ENCODE measurements at regions of chr15 and their contacts with region 1.

Region 1: GRCh38 chr15:64667736-64668161 is 107.6 kb downstream of the RBPMS2 start:
- DNase-seq: no peak
- H3K4me3 ChIP-seq: no peak overlapping the region
- H3K27ac ChIP-seq: no peak overlapping the region
- H3K4me1 ChIP-seq: no peaks in the 10 kb centered on the region
- H3K27me3 ChIP-seq: no peaks in the 10 kb centered on the region
- CTCF ChIP-seq: no peak

Region 2: DNA sequence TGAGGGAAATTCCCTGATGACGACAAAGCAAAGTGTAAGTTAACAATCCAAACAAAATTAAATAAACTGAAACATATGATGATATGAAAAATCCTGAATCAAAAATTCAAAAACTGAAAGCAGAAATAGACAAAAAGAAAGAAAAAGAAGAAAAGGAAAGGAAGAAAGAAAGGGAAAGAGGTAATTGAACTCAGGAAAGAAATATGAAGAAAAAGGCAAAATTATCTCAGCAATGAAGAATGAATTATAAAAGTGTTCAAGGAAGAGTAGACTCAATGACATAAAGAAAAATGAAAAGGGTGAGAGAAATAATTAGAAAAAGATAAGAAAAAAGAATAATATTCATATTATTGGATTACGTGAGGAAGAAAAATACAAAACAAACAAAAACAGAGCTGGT is 888.9 kb before region 1 on chr15:
- CTCF ChIA-PET with region 1: no interaction called
- POLR2A ChIA-PET with region 1: interaction called, 15 read pairs
- intact Hi-C with region 1: no loop called
- DNase-seq: no peak
- H3K4me3 ChIP-seq: no peak overlapping the region
- H3K27ac ChIP-seq: no peak overlapping the region
- H3K4me1 ChIP-seq: no peaks in the 10 kb centered on the region
- H3K27me3 ChIP-seq: no peaks in the 10 kb centered on the region
- CTCF ChIP-seq: no peak

Region 3: GRCh38 chr15:64883100-64883581 is 215.4 kb after region 1 on chr15:
- CTCF ChIA-PET with region 1: no interaction called
- POLR2A ChIA-PET with region 1: no interaction called
- intact Hi-C with region 1: no loop called
- DNase-seq: no peak
- H3K4me3 ChIP-seq: no peak overlapping the region
- H3K27ac ChIP-seq: no peak overlapping the region; the same call in 1 of the 2 replicates
- H3K4me1 ChIP-seq: peaks cover 12% of the 10 kb centered on the region
- H3K27me3 ChIP-seq: no peaks in the 10 kb centered on the region
- CTCF ChIP-seq: no peak

Measured in PC-9 (cell line).